Activated CD8-positive, alpha-beta T cell treated with anti-CD3 and anti-CD28 coated beads, Interleukin-2, amount 10 ng/mL, durations not matched to agents 7 days and 5 days (primary cell): ENCODE measurements at regions of chr14 and their contacts with region 1.

Region 1: DNA sequence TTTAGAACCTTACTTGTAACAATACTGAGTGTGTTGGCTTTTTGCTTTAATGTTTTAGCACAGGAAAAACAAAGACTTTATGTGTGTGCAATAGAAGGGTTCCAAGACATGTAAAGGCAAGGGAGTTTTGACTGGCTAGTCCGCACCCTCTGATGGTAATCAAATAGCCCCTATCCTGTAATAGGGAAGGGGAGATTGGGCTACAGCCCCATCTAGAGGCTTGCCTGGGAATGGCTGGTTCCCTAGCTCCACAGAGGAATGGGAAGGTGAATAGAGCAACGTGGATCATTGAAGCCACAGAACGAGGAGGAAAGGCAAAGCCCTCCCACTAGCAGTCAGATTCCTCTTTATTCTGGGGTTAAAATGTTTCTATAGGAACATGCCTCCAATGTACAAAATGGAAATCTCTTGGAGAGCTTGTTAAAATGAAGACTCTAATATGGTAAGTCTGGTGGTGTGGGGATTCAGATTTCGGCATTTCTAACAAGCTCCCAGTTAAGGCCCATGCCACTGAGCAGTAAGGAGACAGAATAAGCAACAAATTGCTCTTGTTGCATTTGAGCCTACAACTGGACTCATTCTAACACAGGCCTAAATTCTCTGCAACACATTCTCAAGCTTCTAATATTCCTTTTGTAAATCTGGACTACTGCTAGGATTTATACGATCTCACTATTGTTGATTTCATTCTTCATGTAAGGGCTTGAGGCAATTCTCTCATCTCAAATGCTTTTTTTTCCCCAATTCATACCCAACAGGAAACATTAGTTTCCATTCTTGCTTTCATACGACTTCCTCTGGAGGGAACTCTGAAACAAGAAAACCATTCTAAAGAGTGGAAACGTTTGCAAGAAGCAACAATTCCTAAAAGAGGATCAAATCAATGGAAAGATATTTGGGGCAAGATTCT is 57.1 kb downstream of the NIN start:
- DNase-seq: no peak
- ATAC-seq: peak; percentile 51
- H3K4me3 Mint-ChIP-seq: no peak overlapping the region
- H3K27ac Mint-ChIP-seq: peak overlapping the region; percentile 58
- H3K4me1 Mint-ChIP-seq: peaks cover 21% of the 10 kb centered on the region
- H3K27me3 Mint-ChIP-seq: no peaks in the 10 kb centered on the region

Region 2: DNA sequence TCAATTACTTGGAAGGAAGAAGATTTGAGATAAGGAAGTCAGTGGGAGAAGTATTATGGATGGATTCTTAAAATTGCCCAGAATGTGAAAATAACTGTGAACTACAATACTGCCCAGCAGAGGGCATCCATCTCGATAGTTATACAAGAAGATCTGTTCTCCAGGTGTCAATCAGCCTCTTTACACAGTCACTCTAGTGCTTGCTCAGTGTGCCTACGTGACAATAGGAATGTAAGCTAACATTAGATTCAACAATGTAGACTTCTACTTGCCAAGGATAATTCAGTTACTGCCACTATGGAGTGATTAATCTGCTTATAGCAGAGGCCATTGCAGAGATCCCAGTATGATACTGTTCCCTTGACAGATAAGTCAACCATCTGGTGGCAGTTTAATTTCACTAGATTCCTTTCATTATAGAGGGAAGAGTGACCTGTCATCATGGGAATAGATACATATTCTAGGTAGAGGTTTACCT is 230.9 kb before region 1 on chr14:
- CTCF ChIA-PET with region 1: interaction called, 60 read pairs
- POLR2A ChIA-PET with region 1: no interaction called
- DNase-seq: peak; percentile 63
- ATAC-seq: peak; percentile 81
- H3K4me3 Mint-ChIP-seq: no peak overlapping the region
- H3K27ac Mint-ChIP-seq: no peak overlapping the region
- H3K4me1 Mint-ChIP-seq: peaks cover 10% of the 10 kb centered on the region
- H3K27me3 Mint-ChIP-seq: peaks cover 7% of the 10 kb centered on the region

Region 3: GRCh38 chr14:50599700-50600444 is 174.0 kb before region 1 on chr14:
- CTCF ChIA-PET with region 1: interaction called, 34 read pairs
- POLR2A ChIA-PET with region 1: no interaction called
- DNase-seq: no peak
- ATAC-seq: no peak
- H3K4me3 Mint-ChIP-seq: no peak overlapping the region
- H3K27ac Mint-ChIP-seq: no peak overlapping the region
- H3K4me1 Mint-ChIP-seq: no peaks in the 10 kb centered on the region
- H3K27me3 Mint-ChIP-seq: peaks cover 2% of the 10 kb centered on the region

Region 4: GRCh38 chr14:50619556-50620141 is 154.2 kb before region 1 on chr14:
- CTCF ChIA-PET with region 1: interaction called, 41 read pairs
- POLR2A ChIA-PET with region 1: no interaction called
- DNase-seq: no peak
- ATAC-seq: no peak
- H3K4me3 Mint-ChIP-seq: no peak overlapping the region
- H3K27ac Mint-ChIP-seq: no peak overlapping the region
- H3K4me1 Mint-ChIP-seq: no peaks in the 10 kb centered on the region
- H3K27me3 Mint-ChIP-seq: no peaks in the 10 kb centered on the region

Region 5: GRCh38 chr14:50762001-50762930 is 11.6 kb before region 1 on chr14:
- CTCF ChIA-PET with region 1: interaction called, 152 read pairs
- POLR2A ChIA-PET with region 1: no interaction called
- DNase-seq: no peak
- ATAC-seq: no peak
- H3K4me3 Mint-ChIP-seq: no peak overlapping the region
- H3K27ac Mint-ChIP-seq: peak overlapping the region; percentile 6
- H3K4me1 Mint-ChIP-seq: no peaks in the 10 kb centered on the region
- H3K27me3 Mint-ChIP-seq: no peaks in the 10 kb centered on the region

Region 6: DNA sequence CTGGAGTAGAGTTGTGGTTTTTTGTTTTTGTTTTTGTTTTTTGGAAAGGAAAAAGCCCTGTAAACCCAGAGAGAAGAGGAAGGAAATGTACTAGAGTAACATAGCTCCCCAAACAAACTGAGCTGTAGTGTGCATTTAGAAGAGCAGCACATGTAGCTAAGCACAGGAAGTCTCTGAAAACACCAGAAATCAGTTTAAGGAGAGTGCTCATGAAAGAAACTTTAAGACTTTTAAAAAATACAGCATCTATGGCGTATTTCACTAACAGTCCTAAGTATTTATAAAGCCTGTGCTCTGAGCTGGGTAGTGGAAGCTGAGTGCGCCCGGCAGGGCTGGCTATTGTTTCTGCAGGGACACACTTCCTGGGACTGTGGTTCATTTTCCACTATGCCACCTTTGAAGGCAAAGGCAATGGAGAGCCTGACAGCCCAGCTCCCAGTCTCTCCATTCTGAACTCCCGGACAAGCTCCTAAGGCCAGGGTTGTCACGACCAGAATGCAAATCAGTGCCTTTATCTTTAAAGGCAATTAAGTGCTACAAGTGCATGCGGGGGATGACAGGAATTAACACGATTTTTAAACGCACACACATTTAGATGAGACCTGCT is 11.7 kb after region 1 on chr14:
- CTCF ChIA-PET with region 1: interaction called, 35 read pairs
- POLR2A ChIA-PET with region 1: no interaction called
- DNase-seq: no peak
- ATAC-seq: peak; percentile 63
- H3K4me3 Mint-ChIP-seq: no peak overlapping the region
- H3K27ac Mint-ChIP-seq: peak overlapping the region; percentile 79
- H3K4me1 Mint-ChIP-seq: peaks cover 60% of the 10 kb centered on the region
- H3K27me3 Mint-ChIP-seq: no peaks in the 10 kb centered on the region

Region 7: GRCh38 chr14:51035611-51036213 is 261.8 kb after region 1 on chr14:
- CTCF ChIA-PET with region 1: no interaction called
- POLR2A ChIA-PET with region 1: no interaction called
- DNase-seq: no peak
- ATAC-seq: no peak
- H3K4me3 Mint-ChIP-seq: no peak overlapping the region
- H3K27ac Mint-ChIP-seq: no peak overlapping the region
- H3K4me1 Mint-ChIP-seq: no peaks in the 10 kb centered on the region
- H3K27me3 Mint-ChIP-seq: peaks cover 6% of the 10 kb centered on the region